ENCODE measurements at regions of chr4 and their contacts with region 1.

Region 1: GRCh38 chr4:47836641-47837093 is 1.2 kb downstream of the CORIN start:
- DNase-seq: peak; percentile 60
- H3K4me3 ChIP-seq: peak overlapping the region; percentile 67
- H3K27ac ChIP-seq: no peak overlapping the region
- H3K27me3 ChIP-seq: no peaks in the 10 kb centered on the region
- CTCF ChIP-seq: peak; percentile 81

Region 2: DNA sequence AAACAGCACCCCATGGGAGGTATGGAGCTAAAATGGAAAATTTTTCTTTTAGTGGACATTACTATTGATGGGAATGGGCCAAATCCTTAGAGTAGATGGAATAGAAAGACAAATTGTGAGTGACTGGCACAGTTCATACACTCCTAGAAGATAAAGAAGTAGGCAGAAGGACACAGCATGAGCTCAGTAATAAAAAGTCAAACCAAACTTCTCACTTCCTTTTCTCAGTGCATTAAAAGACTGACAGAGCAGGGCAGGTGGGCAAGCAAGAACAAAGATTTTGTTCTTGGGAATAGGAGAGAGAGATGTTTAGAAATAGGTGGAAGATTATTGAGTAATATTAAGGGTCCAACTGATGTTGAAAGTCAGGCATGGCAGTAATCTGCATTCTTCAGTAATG is 219.1 kb before region 1 on chr4:
- CTCF ChIA-PET with region 1: no interaction called
- POLR2A ChIA-PET with region 1: no interaction called
- DNase-seq: no peak
- H3K4me3 ChIP-seq: no peak overlapping the region
- H3K27ac ChIP-seq: no peak overlapping the region
- H3K27me3 ChIP-seq: no peaks in the 10 kb centered on the region
- CTCF ChIP-seq: no peak

Region 3: GRCh38 chr4:47686294-47686872 is 150.3 kb before region 1 on chr4:
- CTCF ChIA-PET with region 1: interaction called, 30 read pairs
- POLR2A ChIA-PET with region 1: no interaction called
- DNase-seq: no peak
- H3K4me3 ChIP-seq: no peak overlapping the region
- H3K27ac ChIP-seq: no peak overlapping the region
- H3K27me3 ChIP-seq: no peaks in the 10 kb centered on the region
- CTCF ChIP-seq: peak; percentile 78

Region 4: GRCh38 chr4:47816748-47817147 is 19.9 kb before region 1 on chr4:
- CTCF ChIA-PET with region 1: interaction called, 12 read pairs
- POLR2A ChIA-PET with region 1: no interaction called
- DNase-seq: no peak
- H3K4me3 ChIP-seq: no peak overlapping the region
- H3K27ac ChIP-seq: no peak overlapping the region
- H3K27me3 ChIP-seq: no peaks in the 10 kb centered on the region
- CTCF ChIP-seq: no peak

Region 5: GRCh38 chr4:47882228-47882627 is 45.6 kb after region 1 on chr4:
- CTCF ChIA-PET with region 1: interaction called, 10 read pairs
- POLR2A ChIA-PET with region 1: no interaction called
- DNase-seq: no peak
- H3K4me3 ChIP-seq: no peak overlapping the region
- H3K27ac ChIP-seq: no peak overlapping the region
- H3K27me3 ChIP-seq: no peaks in the 10 kb centered on the region
- CTCF ChIP-seq: no peak

Region 6: DNA sequence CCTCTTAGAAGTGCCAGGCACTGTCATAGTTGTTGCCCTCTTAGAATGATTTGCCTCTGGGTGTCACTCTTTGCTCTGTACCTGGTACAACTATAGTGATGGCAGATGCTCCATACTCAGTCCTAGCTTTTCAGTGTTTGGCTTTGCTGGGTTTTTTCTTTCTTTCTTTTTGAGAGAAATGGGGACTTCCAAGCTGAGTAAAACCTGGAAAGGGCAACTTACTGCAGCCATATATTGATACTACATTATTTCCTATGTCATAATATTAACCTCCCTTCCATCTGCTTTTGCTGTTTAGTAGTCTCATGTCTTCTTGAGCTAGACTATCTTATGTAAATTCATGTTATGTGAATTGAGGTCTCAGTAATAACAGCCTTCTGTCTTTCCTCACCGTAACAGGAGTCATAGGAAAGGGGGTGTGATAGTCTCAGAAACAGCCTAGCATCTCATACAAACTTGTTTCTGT is 229.0 kb after region 1 on chr4:
- CTCF ChIA-PET with region 1: no interaction called
- POLR2A ChIA-PET with region 1: no interaction called
- DNase-seq: no peak
- H3K4me3 ChIP-seq: no peak overlapping the region
- H3K27ac ChIP-seq: no peak overlapping the region
- H3K27me3 ChIP-seq: no peaks in the 10 kb centered on the region
- CTCF ChIP-seq: no peak